ENCODE measurements at regions of chr19 and their contacts with region 1.

Region 1: GRCh38 chr19:6862673-6863078 is 24.7 kb upstream of the ADGRE1 start:
- DNase-seq: peak; percentile 92
- ATAC-seq: peak; percentile 85
- H3K4me3 ChIP-seq: peak overlapping the region in 3 of 5 experiments; percentile 48 to 73 (median 58)
- H3K4me3 Mint-ChIP-seq: peak overlapping the region; percentile 96
- H3K27ac ChIP-seq: peak overlapping the region; percentile 52 to 89
- H3K27ac Mint-ChIP-seq: peak overlapping the region; percentile 92
- H3K4me1 ChIP-seq: peaks cover 0 to 5% of the 10 kb centered on the region in 2 donors
- H3K4me1 Mint-ChIP-seq: peaks cover 11% of the 10 kb centered on the region
- H3K27me3 ChIP-seq: peaks cover 0 to 3% (median 0%) of the 10 kb centered on the region in 4 experiments
- H3K27me3 Mint-ChIP-seq: peaks cover 3% of the 10 kb centered on the region
- CTCF ChIP-seq: peak; percentile 84

Region 2: GRCh38 chr19:6048808-6049405 is 813.8 kb before region 1 on chr19:
- CTCF ChIA-PET with region 1: interaction called, 7 read pairs
- POLR2A ChIA-PET with region 1: no interaction called
- intact Hi-C with region 1: loop called (anchors 1 kb)
- DNase-seq: peak; percentile 84
- ATAC-seq: peak; percentile 99
- H3K4me3 ChIP-seq: no peak overlapping the region
- H3K4me3 Mint-ChIP-seq: no peak overlapping the region
- H3K27ac ChIP-seq: no peak overlapping the region
- H3K27ac Mint-ChIP-seq: no peak overlapping the region
- H3K4me1 ChIP-seq: no peaks in the 10 kb centered on the region
- H3K4me1 Mint-ChIP-seq: peaks cover 4% of the 10 kb centered on the region
- H3K27me3 ChIP-seq: no peaks in the 10 kb centered on the region
- H3K27me3 Mint-ChIP-seq: no peaks in the 10 kb centered on the region
- CTCF ChIP-seq: peak; percentile 88

Region 3: DNA sequence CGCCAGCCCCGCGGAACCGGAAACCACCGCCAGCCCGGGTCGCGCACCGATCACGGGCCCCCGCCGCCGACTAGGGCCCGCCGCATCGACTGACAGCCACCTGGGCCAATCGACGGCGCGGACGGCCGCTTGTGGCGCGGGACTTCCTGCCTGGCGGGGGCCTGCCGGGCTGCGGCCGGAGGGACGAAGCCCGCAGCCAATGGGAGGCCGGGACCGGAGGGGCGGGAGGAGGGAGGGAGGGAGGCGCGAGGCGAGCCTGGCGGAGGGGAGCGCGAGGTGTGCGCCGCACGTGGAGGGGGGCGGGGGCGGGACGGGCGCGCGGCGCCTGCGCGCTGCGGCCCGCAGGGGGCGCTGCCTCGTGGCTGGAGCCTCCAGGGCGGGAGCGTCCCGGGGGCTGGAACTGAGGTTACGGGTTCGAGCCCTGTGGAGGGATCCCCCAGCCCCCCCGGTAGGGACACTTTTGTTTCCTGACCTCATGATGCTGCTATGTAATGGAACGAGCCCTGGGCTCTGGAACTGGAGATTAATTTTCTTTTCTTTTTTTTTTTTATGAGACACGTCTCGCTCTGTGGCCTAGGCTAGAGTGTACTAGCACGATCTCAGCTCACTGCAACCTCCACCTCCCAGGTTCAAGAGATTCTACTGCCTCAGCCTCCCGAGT is 582.6 kb before region 1 on chr19 and contains the start of gene MLLT1:
- CTCF ChIA-PET with region 1: interaction called, 4 read pairs
- POLR2A ChIA-PET with region 1: no interaction called
- intact Hi-C with region 1: loop called (anchors 5 kb)
- DNase-seq: peak; percentile 97
- ATAC-seq: peak; percentile 97
- H3K4me3 ChIP-seq: peak within 1 kb of the TSS; percentile 44 to 85 (median 62)
- H3K4me3 Mint-ChIP-seq: peak within 1 kb of the TSS; percentile 89
- H3K27ac ChIP-seq: peak within 1 kb of the TSS; percentile 29 to 77
- H3K27ac Mint-ChIP-seq: peak within 1 kb of the TSS; percentile 64
- H3K4me1 ChIP-seq: peaks cover 15 to 23% of the 10 kb centered on the region in 2 donors
- H3K4me1 Mint-ChIP-seq: peaks cover 27% of the 10 kb centered on the region
- H3K27me3 ChIP-seq: no peaks in the 10 kb centered on the region
- H3K27me3 Mint-ChIP-seq: no peaks in the 10 kb centered on the region
- CTCF ChIP-seq: peak; percentile 90
- total RNA-seq, gene MLLT1: 40.2 and 45.7 TPM in 2 replicates

Region 4: GRCh38 chr19:6551607-6552450 is 310.8 kb before region 1 on chr19:
- CTCF ChIA-PET with region 1: interaction called, 12 read pairs
- POLR2A ChIA-PET with region 1: no interaction called
- intact Hi-C with region 1: no loop called
- DNase-seq: peak; percentile 60
- ATAC-seq: peak; percentile 92
- H3K4me3 ChIP-seq: peak overlapping the region in 2 of 5 experiments; percentile 20 to 36
- H3K4me3 Mint-ChIP-seq: peak overlapping the region; percentile 59
- H3K27ac ChIP-seq: no peak overlapping the region
- H3K27ac Mint-ChIP-seq: peak overlapping the region; percentile 53
- H3K4me1 ChIP-seq: peaks cover 9 to 11% of the 10 kb centered on the region in 2 donors
- H3K4me1 Mint-ChIP-seq: peaks cover 7% of the 10 kb centered on the region
- H3K27me3 ChIP-seq: peaks cover 0 to 2% (median 0%) of the 10 kb centered on the region in 4 experiments
- H3K27me3 Mint-ChIP-seq: no peaks in the 10 kb centered on the region
- CTCF ChIP-seq: peak; percentile 47

Region 5: GRCh38 chr19:6632002-6632621 is 230.6 kb before region 1 on chr19:
- CTCF ChIA-PET with region 1: interaction called, 44 read pairs
- POLR2A ChIA-PET with region 1: no interaction called
- intact Hi-C with region 1: no loop called
- DNase-seq: peak; percentile 87
- ATAC-seq: peak; percentile 78
- H3K4me3 ChIP-seq: no peak overlapping the region
- H3K4me3 Mint-ChIP-seq: no peak overlapping the region
- H3K27ac ChIP-seq: no peak overlapping the region
- H3K27ac Mint-ChIP-seq: no peak overlapping the region
- H3K4me1 ChIP-seq: peaks cover 5 to 8% of the 10 kb centered on the region in 2 donors
- H3K4me1 Mint-ChIP-seq: peaks cover 26% of the 10 kb centered on the region
- H3K27me3 ChIP-seq: no peaks in the 10 kb centered on the region
- H3K27me3 Mint-ChIP-seq: peaks cover 3% of the 10 kb centered on the region
- CTCF ChIP-seq: peak; percentile 92

Region 6: GRCh38 chr19:6753178-6754031 is 109.3 kb before region 1 on chr19:
- CTCF ChIA-PET with region 1: interaction called, 8 read pairs
- POLR2A ChIA-PET with region 1: no interaction called
- intact Hi-C with region 1: loop called (anchors 1 kb)
- DNase-seq: peak; percentile 92
- ATAC-seq: peak; percentile 91
- H3K4me3 ChIP-seq: peak overlapping the region in 4 of 5 experiments; percentile 41 to 65 (median 58)
- H3K4me3 Mint-ChIP-seq: peak overlapping the region; percentile 94
- H3K27ac ChIP-seq: peak overlapping the region in 1 of 2 donors; percentile 35
- H3K27ac Mint-ChIP-seq: peak overlapping the region; percentile 96
- H3K4me1 ChIP-seq: peaks cover 14 to 29% of the 10 kb centered on the region in 2 donors
- H3K4me1 Mint-ChIP-seq: peaks cover 26% of the 10 kb centered on the region
- H3K27me3 ChIP-seq: no peaks in the 10 kb centered on the region
- H3K27me3 Mint-ChIP-seq: no peaks in the 10 kb centered on the region
- CTCF ChIP-seq: peak; percentile 68

Region 7: DNA sequence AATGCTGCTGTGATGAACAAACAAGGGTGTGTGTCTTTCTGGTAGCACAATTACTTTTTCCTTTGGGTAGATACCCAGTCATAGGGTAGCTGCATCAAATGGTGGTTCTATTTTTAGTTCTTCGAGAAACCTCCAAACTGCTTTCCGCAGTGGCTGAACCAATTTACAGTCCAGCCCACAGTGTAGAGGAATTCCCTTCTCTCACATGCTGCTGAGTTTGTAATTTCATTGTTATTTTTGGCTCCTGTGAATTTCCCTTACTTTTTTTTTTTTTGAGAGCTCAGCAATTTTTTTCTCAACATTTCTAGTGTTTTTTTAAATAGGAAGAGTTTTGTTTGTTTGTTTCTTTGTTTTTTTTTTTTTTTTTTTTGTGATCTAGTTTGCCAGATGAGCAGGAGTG is 12.8 kb before region 1 on chr19:
- CTCF ChIA-PET with region 1: interaction called, 11 read pairs
- POLR2A ChIA-PET with region 1: no interaction called
- intact Hi-C with region 1: no loop called
- DNase-seq: no peak
- ATAC-seq: no peak
- H3K4me3 ChIP-seq: no peak overlapping the region
- H3K4me3 Mint-ChIP-seq: no peak overlapping the region
- H3K27ac ChIP-seq: no peak overlapping the region
- H3K27ac Mint-ChIP-seq: no peak overlapping the region
- H3K4me1 ChIP-seq: no peaks in the 10 kb centered on the region
- H3K4me1 Mint-ChIP-seq: no peaks in the 10 kb centered on the region
- H3K27me3 ChIP-seq: no peaks in the 10 kb centered on the region
- H3K27me3 Mint-ChIP-seq: no peaks in the 10 kb centered on the region
- CTCF ChIP-seq: no peak

Region 8: DNA sequence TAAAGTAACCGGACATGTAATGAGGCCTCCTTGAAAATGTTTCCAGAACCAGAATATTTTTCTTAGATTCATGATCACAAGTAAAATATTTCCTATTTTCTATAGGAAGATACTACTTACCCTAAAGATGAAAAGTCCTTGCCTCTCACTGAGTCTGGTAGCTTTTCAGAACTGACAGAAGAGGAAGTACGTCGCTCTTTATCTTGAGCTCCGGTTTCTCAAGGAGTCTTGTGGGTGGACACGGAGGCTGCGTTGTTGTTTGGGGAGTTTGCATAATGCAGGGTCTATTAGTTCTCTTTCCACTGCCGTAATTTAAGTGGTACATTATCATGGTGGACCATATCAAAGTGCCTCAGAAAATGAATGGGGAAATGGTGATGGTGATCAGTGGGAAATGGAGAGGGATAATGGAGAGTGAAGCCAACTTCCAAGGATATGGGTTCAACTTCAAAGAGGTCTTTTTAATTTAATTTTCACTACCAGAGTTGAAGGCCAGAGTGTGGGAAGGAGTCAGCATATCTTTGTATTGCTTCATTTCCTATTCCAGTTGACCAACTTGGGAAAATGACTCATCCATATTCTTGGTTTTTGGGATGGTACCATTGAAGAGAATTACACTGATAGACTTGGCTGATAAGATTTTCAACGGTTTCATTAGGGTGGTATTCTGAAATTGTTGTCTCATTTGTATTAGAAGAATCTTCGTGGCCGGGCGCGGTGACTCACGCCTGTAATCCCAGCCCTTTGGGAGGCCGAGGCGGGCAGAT is 135.2 kb after region 1 on chr19:
- CTCF ChIA-PET with region 1: no interaction called
- POLR2A ChIA-PET with region 1: no interaction called
- intact Hi-C with region 1: no loop called
- DNase-seq: no peak
- ATAC-seq: no peak
- H3K4me3 ChIP-seq: no peak overlapping the region
- H3K4me3 Mint-ChIP-seq: no peak overlapping the region
- H3K27ac ChIP-seq: no peak overlapping the region
- H3K27ac Mint-ChIP-seq: no peak overlapping the region
- H3K4me1 ChIP-seq: no peaks in the 10 kb centered on the region
- H3K4me1 Mint-ChIP-seq: peaks cover 3% of the 10 kb centered on the region
- H3K27me3 ChIP-seq: no peaks in the 10 kb centered on the region
- H3K27me3 Mint-ChIP-seq: peaks cover 7% of the 10 kb centered on the region
- CTCF ChIP-seq: no peak

Measured in B cell (primary cell).